T-cell (primary cell): ENCODE measurements at regions of chr12 and their contacts with region 1.

Region 1: DNA sequence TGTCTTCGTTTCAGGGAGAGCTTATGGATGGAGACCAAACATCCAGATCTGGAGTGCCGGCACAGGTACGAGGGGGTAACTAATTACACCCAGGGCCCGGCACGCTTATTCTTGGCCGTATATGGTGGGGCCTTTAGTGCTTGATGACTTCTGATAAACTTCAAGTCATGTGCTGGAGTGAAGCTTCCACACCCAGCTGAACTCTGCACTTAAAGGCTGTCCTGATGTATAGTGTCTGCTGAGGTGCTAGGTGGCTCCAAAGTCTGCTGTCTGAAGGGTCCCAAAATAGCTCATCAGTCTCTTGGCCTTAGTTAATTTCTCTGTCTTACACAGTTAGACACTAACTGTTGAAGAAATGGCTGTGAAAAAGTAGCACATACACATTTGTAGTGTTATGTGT is 17.9 kb downstream of the RNF34 start:
- DNase-seq: no peak
- ATAC-seq: no peak
- H3K4me3 ChIP-seq: no peak overlapping the region
- H3K4me3 Mint-ChIP-seq: no peak overlapping the region
- H3K27ac ChIP-seq: no peak overlapping the region
- H3K27ac Mint-ChIP-seq: no peak overlapping the region
- H3K4me1 ChIP-seq: no peaks in the 10 kb centered on the region
- H3K4me1 Mint-ChIP-seq: peaks cover 19 to 27% (median 19%) of the 10 kb centered on the region in 3 donors
- H3K27me3 ChIP-seq: no peaks in the 10 kb centered on the region
- H3K27me3 Mint-ChIP-seq: no peaks in the 10 kb centered on the region

Region 2: DNA sequence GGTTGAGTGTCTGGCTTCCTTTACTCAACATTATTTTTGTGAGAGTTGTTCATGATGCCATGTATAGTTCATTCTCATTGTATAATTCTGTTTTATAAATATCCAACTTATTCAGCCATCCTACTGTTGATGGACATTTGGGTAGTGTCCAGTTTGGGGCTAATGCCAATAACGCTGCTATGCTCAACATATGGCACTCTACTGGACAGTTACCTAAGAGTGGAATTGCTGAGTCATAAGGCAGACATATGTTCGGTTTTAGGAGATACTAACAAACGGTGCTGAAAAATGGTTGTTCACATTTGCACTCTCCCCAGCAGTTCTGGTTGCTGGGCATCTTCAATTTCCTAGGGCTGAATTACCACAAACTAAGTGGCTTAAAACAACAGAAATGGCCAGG is 236.7 kb before region 1 on chr12:
- CTCF ChIA-PET with region 1: no interaction called
- POLR2A ChIA-PET with region 1: interaction called in 1 of 2 experiments, 13 read pairs
- DNase-seq: no peak
- ATAC-seq: no peak
- H3K4me3 ChIP-seq: no peak overlapping the region
- H3K4me3 Mint-ChIP-seq: no peak overlapping the region
- H3K27ac ChIP-seq: no peak overlapping the region
- H3K27ac Mint-ChIP-seq: no peak overlapping the region
- H3K4me1 ChIP-seq: no peaks in the 10 kb centered on the region
- H3K4me1 Mint-ChIP-seq: no peaks in the 10 kb centered on the region
- H3K27me3 ChIP-seq: no peaks in the 10 kb centered on the region
- H3K27me3 Mint-ChIP-seq: no peaks in the 10 kb centered on the region

Region 3: GRCh38 chr12:123200414-123200813 is 1782.6 kb after region 1 on chr12:
- CTCF ChIA-PET with region 1: no interaction called
- POLR2A ChIA-PET with region 1: interaction called in 1 of 2 experiments, 11 read pairs
- DNase-seq: peak in 3 of 35 experiments; percentile 9 to 15 (median 12)
- ATAC-seq: peak; percentile 27 to 68 (median 62)
- H3K4me3 ChIP-seq: no peak overlapping the region
- H3K4me3 Mint-ChIP-seq: peak overlapping the region in 1 of 3 donors; percentile 12
- H3K27ac ChIP-seq: peak overlapping the region; percentile 5
- H3K27ac Mint-ChIP-seq: peak overlapping the region; percentile 91 to 93
- H3K4me1 ChIP-seq: peaks cover 4 to 5% of the 10 kb centered on the region in 2 experiments
- H3K4me1 Mint-ChIP-seq: peaks cover 18 to 20% (median 19%) of the 10 kb centered on the region in 3 donors
- H3K27me3 ChIP-seq: no peaks in the 10 kb centered on the region
- H3K27me3 Mint-ChIP-seq: no peaks in the 10 kb centered on the region